ENCODE measurements at regions of chr1 and their contacts with region 1.

Region 1: GRCh38 chr1:219534991-219535390 is 77.9 kb downstream of the ZC3H11B start:
- DNase-seq: no peak
- ATAC-seq: no peak
- H3K4me3 Mint-ChIP-seq: no peak overlapping the region
- H3K27ac Mint-ChIP-seq: no peak overlapping the region
- H3K4me1 Mint-ChIP-seq: no peaks in the 10 kb centered on the region
- H3K27me3 Mint-ChIP-seq: no peaks in the 10 kb centered on the region

Region 2: DNA sequence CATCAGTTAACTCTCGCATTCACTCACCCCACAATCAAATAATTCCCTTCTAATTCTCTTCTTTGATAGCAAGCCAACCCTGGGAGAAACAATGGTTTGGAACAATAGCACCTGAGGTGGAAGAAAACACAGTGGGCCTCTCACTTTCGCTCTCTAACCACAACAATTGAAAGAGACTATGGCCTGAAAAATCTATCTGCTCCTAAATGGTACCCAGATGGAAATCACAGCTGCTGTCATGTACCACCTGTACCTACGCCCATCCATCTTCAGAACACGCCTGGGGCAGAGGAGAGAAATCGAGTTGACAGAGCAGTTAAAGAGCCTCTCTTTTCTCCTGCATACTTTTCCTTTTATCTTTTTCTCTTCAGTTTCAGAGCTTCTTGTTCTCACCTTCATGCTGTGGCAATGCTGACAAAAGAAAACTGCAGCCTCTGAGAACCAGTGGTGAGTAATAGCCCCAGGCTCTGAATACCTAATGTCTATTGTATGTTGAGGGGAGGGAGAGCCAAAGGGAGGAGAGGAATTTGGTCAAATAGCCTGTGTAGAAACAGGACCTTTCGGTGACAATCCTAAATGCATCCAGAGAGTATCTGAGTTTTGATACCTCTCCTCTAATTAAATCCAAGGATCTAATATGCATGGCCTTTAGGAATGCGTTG is 20.2 kb after region 1 on chr1:
- CTCF ChIA-PET with region 1: interaction called, 3 read pairs
- POLR2A ChIA-PET with region 1: no interaction called
- intact Hi-C with region 1: loop called in 1 of 2 experiments (anchors 2 kb)
- DNase-seq: no peak
- ATAC-seq: no peak
- H3K4me3 Mint-ChIP-seq: no peak overlapping the region
- H3K27ac Mint-ChIP-seq: no peak overlapping the region
- H3K4me1 Mint-ChIP-seq: no peaks in the 10 kb centered on the region
- H3K27me3 Mint-ChIP-seq: peaks cover 2% of the 10 kb centered on the region

Region 3: DNA sequence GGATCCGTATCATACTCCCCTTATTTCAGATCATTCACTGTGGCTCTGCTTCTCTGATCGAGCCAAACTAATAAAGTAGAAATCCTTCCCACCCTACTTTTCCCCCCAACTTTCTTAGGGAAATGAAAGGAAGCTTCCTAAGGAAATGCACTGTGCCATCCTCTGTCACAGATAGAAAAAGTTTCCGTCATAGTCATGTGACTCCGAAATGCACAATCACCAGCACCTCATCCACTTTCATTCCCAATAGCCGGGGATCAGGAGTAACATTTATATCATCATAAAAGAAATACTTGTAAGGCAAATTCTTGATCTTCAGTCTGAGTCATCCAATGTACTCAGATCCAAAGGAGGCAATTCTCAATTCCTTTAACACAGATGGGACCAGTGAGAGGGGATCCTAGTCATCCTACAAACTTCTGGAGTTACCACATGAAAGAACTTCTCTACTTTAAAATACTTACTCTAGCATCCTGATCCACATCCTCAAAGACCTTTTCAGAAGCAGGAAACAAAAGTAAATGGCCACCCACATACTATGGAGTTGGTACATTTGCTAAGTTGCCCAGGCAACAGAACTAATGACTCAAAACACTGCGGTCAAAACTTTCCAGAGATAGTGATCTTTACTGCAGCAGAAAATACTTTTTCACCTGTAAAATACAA is 175.7 kb after region 1 on chr1:
- CTCF ChIA-PET with region 1: no interaction called
- POLR2A ChIA-PET with region 1: no interaction called
- intact Hi-C with region 1: no loop called
- DNase-seq: no peak
- ATAC-seq: peak; percentile 16
- H3K4me3 Mint-ChIP-seq: no peak overlapping the region
- H3K27ac Mint-ChIP-seq: no peak overlapping the region
- H3K4me1 Mint-ChIP-seq: no peaks in the 10 kb centered on the region
- H3K27me3 Mint-ChIP-seq: no peaks in the 10 kb centered on the region

Measured in activated CD4-positive, alpha-beta T cell treated with anti-CD3 and anti-CD28 coated beads for 36 hours (primary cell).